ENCODE measurements at regions of chr15 and their contacts with region 1.

Region 1: GRCh38 chr15:58628206-58628947 is 121.1 kb downstream of the ADAM10 start:
- DNase-seq: peak; percentile 7
- H3K4me3 ChIP-seq: peak overlapping the region; percentile 6 to 25 (median 23)
- H3K27ac ChIP-seq: peak overlapping the region; percentile 6
- H3K4me1 ChIP-seq: no peaks in the 10 kb centered on the region
- H3K27me3 ChIP-seq: no peaks in the 10 kb centered on the region
- CTCF ChIP-seq: no peak

Region 2: DNA sequence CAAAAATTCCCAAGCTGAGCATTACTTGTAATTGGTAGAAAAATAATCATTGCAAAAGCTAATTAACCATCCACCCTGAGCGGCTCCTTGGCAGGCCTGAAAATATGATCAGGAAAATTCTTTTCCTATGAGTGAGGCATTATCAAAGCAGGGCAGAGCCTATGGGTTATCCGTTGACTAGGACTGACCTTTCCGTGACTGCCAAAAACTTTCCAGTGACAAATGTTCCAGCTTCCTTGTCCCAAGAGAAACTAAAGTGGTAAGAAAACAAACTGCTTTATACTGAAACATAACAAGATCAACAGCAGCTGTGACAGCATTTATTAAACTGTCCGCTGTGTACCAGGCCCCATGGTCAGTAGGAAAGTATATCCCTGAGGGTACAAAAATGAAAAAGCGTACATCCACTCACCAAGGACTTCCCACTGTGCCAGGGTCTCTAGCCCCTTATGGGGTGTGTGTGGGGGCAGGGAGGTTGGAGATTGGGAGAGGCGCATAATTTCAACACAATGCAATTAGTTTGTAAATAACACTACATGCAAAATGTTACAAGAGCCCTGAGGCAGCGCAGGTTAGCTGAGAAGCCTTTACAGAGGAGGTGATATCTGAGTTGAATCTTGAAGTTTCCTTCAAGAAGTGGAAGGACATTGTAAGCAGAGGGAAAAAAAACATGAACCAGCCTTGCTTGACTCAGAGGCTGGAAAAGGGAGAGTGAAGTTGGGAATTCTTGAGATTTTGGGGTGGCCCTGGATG is 188.0 kb before region 1 on chr15:
- CTCF ChIA-PET with region 1: no interaction called
- dilution Hi-C with region 1: no loop called
- in situ Hi-C with region 1: no loop called
- intact Hi-C with region 1: loop called (anchors 10 kb)
- DNase-seq: peak; percentile 52
- H3K4me3 ChIP-seq: no peak overlapping the region
- H3K27ac ChIP-seq: peak overlapping the region; percentile 93
- H3K4me1 ChIP-seq: peaks cover 36% of the 10 kb centered on the region
- H3K27me3 ChIP-seq: no peaks in the 10 kb centered on the region
- CTCF ChIP-seq: no peak

Measured in mammary epithelial cell (primary cell).